ENCODE measurements at regions of chr13 and their contacts with region 1.

Region 1: GRCh38 chr13:27374650-27375049 is 49.8 kb upstream of the GTF3A start:
- DNase-seq: peak; percentile 34 to 58
- H3K4me3 ChIP-seq: no peak overlapping the region
- H3K27ac ChIP-seq: no peak overlapping the region
- H3K4me1 ChIP-seq: no peaks in the 10 kb centered on the region
- H3K27me3 ChIP-seq: peaks cover 44% of the 10 kb centered on the region
- CTCF ChIP-seq: peak; percentile 73

Region 2: DNA sequence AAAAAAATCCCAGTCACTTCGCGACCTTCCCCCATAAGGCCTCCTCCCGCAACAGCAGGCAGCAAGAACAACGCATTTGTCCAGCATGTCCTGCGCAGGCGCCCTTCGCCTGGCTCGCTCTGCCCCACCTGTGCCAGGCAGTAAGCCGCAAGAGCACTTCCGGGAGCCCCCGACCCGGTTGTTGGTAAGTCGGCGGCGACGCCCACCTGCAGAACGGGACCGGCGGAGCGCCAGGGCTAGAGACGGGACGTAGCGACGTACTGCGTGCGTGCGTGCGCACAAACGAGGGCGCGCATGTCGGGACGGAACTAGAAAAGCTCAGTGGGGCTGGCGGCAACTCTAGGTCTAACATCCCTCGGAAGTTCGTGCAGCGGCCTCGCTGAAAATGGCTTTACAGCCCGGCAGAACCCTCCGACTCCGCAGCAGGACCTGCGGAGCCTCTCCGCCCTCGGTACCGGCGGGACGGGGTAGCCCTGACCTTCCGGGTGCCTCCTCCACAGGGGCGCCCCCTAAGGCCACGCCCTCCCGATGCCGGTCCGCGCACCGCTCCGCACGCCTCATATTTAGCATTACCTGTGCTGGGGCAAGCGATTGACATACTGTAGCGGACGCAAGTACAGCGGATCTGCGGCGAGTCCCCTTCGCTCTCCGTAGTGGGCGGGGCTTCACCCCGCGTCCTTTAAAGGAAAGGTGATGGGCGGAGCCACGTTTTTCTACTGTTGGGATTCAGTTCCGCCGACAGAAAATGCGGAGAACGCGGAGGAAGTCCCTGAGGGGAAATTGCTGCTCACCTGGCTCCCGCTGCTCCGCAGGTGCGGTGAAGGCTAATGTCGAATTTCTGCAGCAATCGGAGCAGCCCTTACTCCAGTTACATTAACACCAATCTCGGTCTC is 75.5 kb after region 1 on chr13 and contains the start of gene MTIF3:
- CTCF ChIA-PET with region 1: interaction called, 11 read pairs
- POLR2A ChIA-PET with region 1: no interaction called
- intact Hi-C with region 1: no loop called
- DNase-seq: peak; percentile 90 to 92
- H3K4me3 ChIP-seq: peak within 1 kb of the TSS; percentile 83
- H3K27ac ChIP-seq: peak within 1 kb of the TSS; percentile 94
- H3K4me1 ChIP-seq: peaks cover 25% of the 10 kb centered on the region
- H3K27me3 ChIP-seq: no peaks in the 10 kb centered on the region
- CTCF ChIP-seq: no peak
- total RNA-seq, gene MTIF3: 22.9 and 28.3 TPM in 2 replicates

Region 3: GRCh38 chr13:27533155-27533643 is 158.5 kb after region 1 on chr13:
- CTCF ChIA-PET with region 1: no interaction called
- POLR2A ChIA-PET with region 1: no interaction called
- intact Hi-C with region 1: loop called (anchors 2 kb)
- DNase-seq: peak; percentile 48 to 81
- H3K4me3 ChIP-seq: peak overlapping the region; percentile 44; the same call in 1 of the 2 replicates
- H3K27ac ChIP-seq: no peak overlapping the region
- H3K4me1 ChIP-seq: no peaks in the 10 kb centered on the region
- H3K27me3 ChIP-seq: no peaks in the 10 kb centered on the region
- CTCF ChIP-seq: peak; percentile 87

Region 4: DNA sequence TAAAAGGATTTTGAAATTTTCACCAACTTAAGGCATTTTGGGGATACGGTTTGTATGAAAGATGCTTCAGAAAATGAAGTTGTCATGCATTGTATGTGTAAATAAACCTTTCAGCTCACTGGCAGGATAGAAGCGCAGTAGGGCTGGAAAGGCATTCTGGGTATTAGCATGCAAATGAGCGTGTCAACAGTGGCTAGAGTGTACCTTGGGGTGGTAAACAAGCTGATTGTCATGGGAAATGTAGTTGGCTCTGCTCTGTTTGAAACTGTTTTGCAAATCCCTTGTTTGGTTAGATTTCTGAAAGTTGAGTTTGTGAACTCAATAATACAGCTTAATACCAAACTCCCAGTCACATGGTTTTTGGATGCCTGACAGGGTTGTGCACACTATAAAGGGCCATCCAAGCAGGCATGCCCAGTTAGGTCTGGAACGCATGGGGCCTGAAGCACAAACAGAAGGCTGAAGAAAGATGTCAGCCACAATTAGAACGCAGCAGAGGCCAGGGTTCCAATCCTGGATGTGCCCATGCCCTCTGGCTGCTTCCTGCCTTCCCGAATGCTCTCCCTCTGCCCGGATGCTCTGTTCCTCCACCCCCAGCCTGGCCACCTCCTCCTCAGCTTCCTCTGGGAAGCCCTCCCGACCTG is 432.2 kb after region 1 on chr13:
- CTCF ChIA-PET with region 1: no interaction called
- POLR2A ChIA-PET with region 1: interaction called, 10 read pairs
- intact Hi-C with region 1: no loop called
- DNase-seq: no peak
- H3K4me3 ChIP-seq: no peak overlapping the region
- H3K27ac ChIP-seq: no peak overlapping the region
- H3K4me1 ChIP-seq: peaks cover 13% of the 10 kb centered on the region
- H3K27me3 ChIP-seq: peaks cover 25% of the 10 kb centered on the region; the same call in 1 of the 2 replicates
- CTCF ChIP-seq: no peak

Region 5: GRCh38 chr13:28077231-28077630 is 702.6 kb after region 1 on chr13:
- CTCF ChIA-PET with region 1: no interaction called
- POLR2A ChIA-PET with region 1: no interaction called
- intact Hi-C with region 1: no loop called
- DNase-seq: no peak
- H3K4me3 ChIP-seq: no peak overlapping the region
- H3K27ac ChIP-seq: no peak overlapping the region
- H3K4me1 ChIP-seq: no peaks in the 10 kb centered on the region
- H3K27me3 ChIP-seq: peaks cover 37% of the 10 kb centered on the region
- CTCF ChIP-seq: no peak

Region 6: GRCh38 chr13:28282451-28282850 is 907.8 kb after region 1 on chr13:
- CTCF ChIA-PET with region 1: no interaction called
- POLR2A ChIA-PET with region 1: no interaction called
- intact Hi-C with region 1: no loop called
- DNase-seq: no peak
- H3K4me3 ChIP-seq: no peak overlapping the region
- H3K27ac ChIP-seq: no peak overlapping the region
- H3K4me1 ChIP-seq: no peaks in the 10 kb centered on the region
- H3K27me3 ChIP-seq: no peaks in the 10 kb centered on the region
- CTCF ChIP-seq: no peak

Measured in PC-9 (cell line).